B cell (primary cell): ENCODE measurements at regions of chr11 and their contacts with region 1.

Region 1: GRCh38 chr11:57530596-57531507 is at the start of gene TIMM10:
- DNase-seq: peak; percentile 97
- ATAC-seq: peak; percentile 94
- H3K4me3 ChIP-seq: peak within 1 kb of the TSS; percentile 70 to 94 (median 87)
- H3K4me3 Mint-ChIP-seq: peak within 1 kb of the TSS; percentile 94
- H3K27ac ChIP-seq: peak within 1 kb of the TSS; percentile 67 to 91
- H3K27ac Mint-ChIP-seq: peak within 1 kb of the TSS; percentile 95
- H3K4me1 ChIP-seq: peaks cover 13 to 17% of the 10 kb centered on the region in 2 donors
- H3K4me1 Mint-ChIP-seq: peaks cover 24% of the 10 kb centered on the region
- H3K27me3 ChIP-seq: no peaks in the 10 kb centered on the region
- H3K27me3 Mint-ChIP-seq: no peaks in the 10 kb centered on the region
- CTCF ChIP-seq: no peak
- total RNA-seq, gene TIMM10: 39.6 and 39.8 TPM in 2 replicates

Region 2: GRCh38 chr11:57379732-57380131 is 151.1 kb before region 1 on chr11:
- CTCF ChIA-PET with region 1: no interaction called
- POLR2A ChIA-PET with region 1: no interaction called
- intact Hi-C with region 1: no loop called
- DNase-seq: no peak
- ATAC-seq: no peak
- H3K4me3 ChIP-seq: no peak overlapping the region
- H3K4me3 Mint-ChIP-seq: no peak overlapping the region
- H3K27ac ChIP-seq: no peak overlapping the region
- H3K27ac Mint-ChIP-seq: no peak overlapping the region
- H3K4me1 ChIP-seq: no peaks in the 10 kb centered on the region
- H3K4me1 Mint-ChIP-seq: no peaks in the 10 kb centered on the region
- H3K27me3 ChIP-seq: peaks cover 0 to 5% (median 0%) of the 10 kb centered on the region in 4 experiments
- H3K27me3 Mint-ChIP-seq: peaks cover 20% of the 10 kb centered on the region
- CTCF ChIP-seq: no peak

Region 3: GRCh38 chr11:57426929-57427726 is 103.7 kb before region 1 on chr11 and contains the start of gene SLC43A3:
- CTCF ChIA-PET with region 1: interaction called, 7 read pairs
- POLR2A ChIA-PET with region 1: no interaction called
- intact Hi-C with region 1: loop called (anchors 1 kb)
- DNase-seq: peak; percentile 78
- ATAC-seq: peak; percentile 88
- H3K4me3 ChIP-seq: peak within 1 kb of the TSS; percentile 32 to 90 (median 66)
- H3K4me3 Mint-ChIP-seq: peak within 1 kb of the TSS; percentile 91
- H3K27ac ChIP-seq: peak within 1 kb of the TSS; percentile 29 to 68
- H3K27ac Mint-ChIP-seq: peak within 1 kb of the TSS; percentile 92
- H3K4me1 ChIP-seq: peaks cover 28 to 33% of the 10 kb centered on the region in 2 donors
- H3K4me1 Mint-ChIP-seq: peaks cover 36% of the 10 kb centered on the region
- H3K27me3 ChIP-seq: no peaks in the 10 kb centered on the region
- H3K27me3 Mint-ChIP-seq: no peaks in the 10 kb centered on the region
- CTCF ChIP-seq: no peak
- total RNA-seq, gene SLC43A3: 19.3 and 20.9 TPM in 2 replicates

Region 4: GRCh38 chr11:57493507-57494503 is 37.0 kb before region 1 on chr11:
- CTCF ChIA-PET with region 1: interaction called, 355 read pairs
- POLR2A ChIA-PET with region 1: no interaction called
- intact Hi-C with region 1: loop called (anchors 1 kb)
- DNase-seq: peak; percentile 77
- ATAC-seq: peak; percentile 96
- H3K4me3 ChIP-seq: no peak overlapping the region
- H3K4me3 Mint-ChIP-seq: no peak overlapping the region
- H3K27ac ChIP-seq: no peak overlapping the region
- H3K27ac Mint-ChIP-seq: no peak overlapping the region
- H3K4me1 ChIP-seq: no peaks in the 10 kb centered on the region
- H3K4me1 Mint-ChIP-seq: peaks cover 2% of the 10 kb centered on the region
- H3K27me3 ChIP-seq: no peaks in the 10 kb centered on the region
- H3K27me3 Mint-ChIP-seq: no peaks in the 10 kb centered on the region
- CTCF ChIP-seq: peak; percentile 97

Region 5: GRCh38 chr11:57515332-57516060 is 15.4 kb before region 1 on chr11 and contains the start of gene SLC43A1:
- CTCF ChIA-PET with region 1: interaction called, 98 read pairs
- POLR2A ChIA-PET with region 1: interaction called, 3 read pairs
- intact Hi-C with region 1: loop called (anchors 2 kb)
- DNase-seq: peak; percentile 46
- ATAC-seq: peak; percentile 34
- H3K4me3 ChIP-seq: peak within 1 kb of the TSS; percentile 57 to 93 (median 81)
- H3K4me3 Mint-ChIP-seq: peak within 1 kb of the TSS; percentile 97
- H3K27ac ChIP-seq: peak within 1 kb of the TSS in 1 of 2 donors; percentile 34
- H3K27ac Mint-ChIP-seq: peak within 1 kb of the TSS; percentile 73
- H3K4me1 ChIP-seq: peaks cover 6 to 22% of the 10 kb centered on the region in 2 donors
- H3K4me1 Mint-ChIP-seq: peaks cover 30% of the 10 kb centered on the region
- H3K27me3 ChIP-seq: no peaks in the 10 kb centered on the region
- H3K27me3 Mint-ChIP-seq: no peaks in the 10 kb centered on the region
- CTCF ChIP-seq: no peak
- total RNA-seq, gene SLC43A1: 3.7 and 5.9 TPM in 2 replicates

Region 6: DNA sequence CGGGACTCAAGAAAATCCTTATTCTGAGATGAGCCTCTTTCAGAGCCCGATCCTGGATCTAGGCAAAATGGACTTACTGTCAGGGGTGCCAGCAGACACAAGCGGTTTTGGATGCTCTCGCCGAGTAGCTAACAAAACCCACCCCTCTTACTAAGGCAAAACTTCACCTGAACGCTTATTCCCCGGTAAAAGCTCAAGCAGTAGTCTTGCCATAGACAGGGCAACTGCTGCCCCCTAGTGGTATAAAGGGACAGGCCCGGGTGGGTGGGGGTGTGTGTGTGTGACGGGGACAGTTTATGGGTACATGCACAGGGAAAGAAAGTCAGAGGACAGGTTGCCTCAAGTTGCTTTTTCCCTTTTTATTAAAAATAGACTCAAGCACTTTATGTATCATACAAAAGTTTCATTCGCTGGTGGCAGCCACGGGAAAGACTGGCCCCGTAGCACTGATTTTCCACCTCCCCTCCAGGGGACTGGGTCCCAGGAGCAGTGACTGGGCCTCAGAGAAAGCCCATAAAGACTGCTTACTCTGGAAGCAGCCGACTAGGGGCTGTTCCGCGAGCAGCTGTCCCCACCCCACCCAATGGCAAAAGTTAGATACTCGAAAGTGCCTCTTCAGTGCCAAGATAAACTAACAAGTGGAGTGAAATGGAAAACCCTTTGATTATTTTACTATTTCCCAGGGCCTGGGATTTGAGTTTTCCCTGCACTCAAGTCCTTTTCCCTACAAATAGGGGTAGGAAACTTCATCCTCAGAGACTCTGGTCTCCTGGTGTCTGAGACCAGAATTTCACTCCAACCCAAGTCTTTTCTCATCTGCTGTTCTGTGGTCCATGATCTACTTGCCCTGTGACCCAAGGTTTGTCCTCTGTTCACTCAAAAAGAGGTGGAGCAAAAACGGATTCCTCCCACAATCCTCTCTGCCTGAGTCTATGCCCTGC is 114.2 kb after region 1 on chr11:
- CTCF ChIA-PET with region 1: interaction called, 44 read pairs
- POLR2A ChIA-PET with region 1: no interaction called
- intact Hi-C with region 1: loop called (anchors 5 kb)
- DNase-seq: peak; percentile 85
- ATAC-seq: peak; percentile 71
- H3K4me3 ChIP-seq: no peak overlapping the region
- H3K4me3 Mint-ChIP-seq: no peak overlapping the region
- H3K27ac ChIP-seq: no peak overlapping the region
- H3K27ac Mint-ChIP-seq: no peak overlapping the region
- H3K4me1 ChIP-seq: peaks cover 43 to 46% of the 10 kb centered on the region in 2 donors
- H3K4me1 Mint-ChIP-seq: peaks cover 40% of the 10 kb centered on the region
- H3K27me3 ChIP-seq: peaks cover 0 to 58% (median 47%) of the 10 kb centered on the region in 4 experiments
- H3K27me3 Mint-ChIP-seq: peaks cover 70% of the 10 kb centered on the region
- CTCF ChIP-seq: peak; percentile 81

Region 7: DNA sequence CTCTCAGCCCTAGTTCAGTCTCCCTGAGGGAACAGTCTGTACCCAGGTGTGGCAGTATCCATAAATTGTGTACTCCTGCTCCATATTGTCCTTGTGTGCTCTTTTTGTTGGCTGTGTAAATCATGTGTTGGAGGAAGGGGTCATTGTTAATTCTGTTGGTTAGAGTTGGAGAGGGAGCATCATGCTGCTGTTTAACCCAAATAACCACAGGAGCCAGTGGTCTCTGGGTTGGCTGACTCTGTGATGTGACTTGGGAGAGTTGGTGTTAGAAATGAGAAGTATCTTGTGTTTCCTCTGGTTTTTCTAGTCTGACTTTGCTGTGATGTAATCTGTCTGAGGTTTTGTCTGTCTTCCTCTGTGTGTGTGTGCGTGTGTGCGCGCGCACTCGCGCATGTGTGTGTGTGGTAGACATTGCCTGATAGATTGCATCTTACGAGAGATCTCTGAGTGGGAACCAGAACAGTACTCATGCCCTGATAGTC is 261.2 kb after region 1 on chr11:
- CTCF ChIA-PET with region 1: no interaction called
- POLR2A ChIA-PET with region 1: no interaction called
- intact Hi-C with region 1: loop called (anchors 2 kb)
- DNase-seq: peak; percentile 94
- ATAC-seq: peak; percentile 89
- H3K4me3 ChIP-seq: peak overlapping the region; percentile 15 to 62 (median 36)
- H3K4me3 Mint-ChIP-seq: peak overlapping the region; percentile 80
- H3K27ac ChIP-seq: peak overlapping the region; percentile 87 to 97
- H3K27ac Mint-ChIP-seq: peak overlapping the region; percentile 93
- H3K4me1 ChIP-seq: peaks cover 53 to 57% of the 10 kb centered on the region in 2 donors
- H3K4me1 Mint-ChIP-seq: peaks cover 56% of the 10 kb centered on the region
- H3K27me3 ChIP-seq: no peaks in the 10 kb centered on the region
- H3K27me3 Mint-ChIP-seq: no peaks in the 10 kb centered on the region
- CTCF ChIP-seq: no peak